ENCODE measurements at regions of chr12 and their contacts with region 1.

Region 1: GRCh38 chr12:27024291-27024690 is 1.9 kb downstream of the MED21 start:
- DNase-seq: no peak
- H3K4me3 ChIP-seq: no peak overlapping the region
- H3K4me3 Mint-ChIP-seq: peak overlapping the region in 6 of 8 donors; percentile 57 to 100 (median 98)
- H3K27ac ChIP-seq: no peak overlapping the region
- H3K27ac Mint-ChIP-seq: peak overlapping the region in 2 of 7 donors; percentile 23 to 98
- H3K4me1 ChIP-seq: peaks cover 30% of the 10 kb centered on the region
- H3K4me1 Mint-ChIP-seq: peaks cover 31 to 51% (median 37%) of the 10 kb centered on the region in 4 donors
- H3K27me3 ChIP-seq: no peaks in the 10 kb centered on the region
- H3K27me3 Mint-ChIP-seq: peaks cover 0 to 2% of the 10 kb centered on the region in 2 donors

Region 2: DNA sequence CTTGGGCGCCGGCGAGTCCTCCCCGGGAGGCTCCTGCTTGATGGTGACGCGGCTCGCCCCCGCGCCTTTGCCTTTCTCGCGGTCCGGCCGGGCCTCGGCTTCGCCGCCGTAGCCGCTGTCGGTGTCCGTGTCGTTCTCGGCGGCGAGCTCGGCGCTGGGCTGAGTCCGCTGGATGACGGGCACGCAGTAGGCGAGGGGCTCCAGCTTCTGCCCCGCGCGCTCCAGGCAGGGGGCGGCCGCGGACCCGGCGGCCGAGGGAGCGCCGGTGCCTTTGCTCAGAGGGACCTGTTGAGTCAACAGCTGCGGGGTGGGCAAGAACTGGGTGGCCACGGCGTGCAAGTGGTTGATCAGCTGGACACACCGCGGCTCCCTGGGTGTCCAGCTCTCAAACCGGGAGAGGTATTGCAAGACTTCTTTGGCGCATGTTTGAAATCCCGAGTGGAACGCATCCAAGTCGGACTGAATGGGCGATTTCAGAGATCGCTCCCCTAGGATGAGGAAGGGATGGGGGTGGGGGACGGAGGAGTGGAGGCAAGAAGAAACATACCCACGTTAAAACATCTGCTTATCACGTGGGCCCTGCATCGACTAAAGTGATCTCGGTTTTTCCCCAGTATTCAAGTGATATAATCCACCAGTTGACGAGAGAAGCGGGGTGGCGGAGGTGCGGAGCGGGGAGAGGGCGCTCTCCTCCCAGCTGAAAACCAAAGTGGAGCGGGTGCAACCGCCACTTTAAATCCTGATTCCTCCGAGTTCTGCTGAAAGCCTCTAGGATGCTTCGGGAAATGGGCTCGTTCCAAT is 901.4 kb before region 1 on chr12:
- CTCF ChIA-PET with region 1: no interaction called
- POLR2A ChIA-PET with region 1: no interaction called
- intact Hi-C with region 1: loop called (anchors 5 kb)
- DNase-seq: peak in 2 of 5 donors; percentile 14 to 16
- H3K4me3 ChIP-seq: peak overlapping the region in 1 of 2 donors; percentile 33
- H3K4me3 Mint-ChIP-seq: peak overlapping the region; percentile 82 to 95 (median 88)
- H3K27ac ChIP-seq: no peak overlapping the region
- H3K27ac Mint-ChIP-seq: peak overlapping the region in 3 of 7 donors; percentile 16 to 62 (median 23)
- H3K4me1 ChIP-seq: peaks cover 39% of the 10 kb centered on the region
- H3K4me1 Mint-ChIP-seq: peaks cover 26 to 61% (median 39%) of the 10 kb centered on the region in 4 donors
- H3K27me3 ChIP-seq: peaks cover 45% of the 10 kb centered on the region
- H3K27me3 Mint-ChIP-seq: peaks cover 54 to 63% of the 10 kb centered on the region in 2 donors

Region 3: DNA sequence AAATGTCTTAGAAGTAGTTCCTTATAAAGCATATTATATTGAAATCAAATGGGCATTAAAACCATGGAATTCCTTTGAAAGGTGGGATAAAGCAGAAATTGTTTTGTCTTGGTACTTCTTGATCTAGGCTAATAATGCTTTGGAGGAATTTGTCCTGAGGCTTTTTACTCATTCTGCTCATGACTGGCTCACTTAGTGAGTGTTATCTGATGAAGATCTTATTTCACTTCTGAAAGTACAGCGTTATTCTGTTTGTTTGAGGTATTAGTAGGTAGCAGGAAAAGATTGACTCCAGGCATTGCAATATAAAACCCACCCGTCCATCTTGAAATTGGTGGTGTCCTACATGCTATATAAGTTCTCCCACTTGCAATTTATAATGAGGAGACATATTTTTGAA is 52.6 kb after region 1 on chr12:
- CTCF ChIA-PET with region 1: no interaction called
- POLR2A ChIA-PET with region 1: no interaction called
- intact Hi-C with region 1: no loop called
- DNase-seq: no peak
- H3K4me3 ChIP-seq: no peak overlapping the region
- H3K4me3 Mint-ChIP-seq: no peak overlapping the region
- H3K27ac ChIP-seq: no peak overlapping the region
- H3K27ac Mint-ChIP-seq: no peak overlapping the region
- H3K4me1 ChIP-seq: no peaks in the 10 kb centered on the region
- H3K4me1 Mint-ChIP-seq: peaks cover 0 to 6% (median 4%) of the 10 kb centered on the region in 4 donors
- H3K27me3 ChIP-seq: no peaks in the 10 kb centered on the region
- H3K27me3 Mint-ChIP-seq: no peaks in the 10 kb centered on the region

Region 4: DNA sequence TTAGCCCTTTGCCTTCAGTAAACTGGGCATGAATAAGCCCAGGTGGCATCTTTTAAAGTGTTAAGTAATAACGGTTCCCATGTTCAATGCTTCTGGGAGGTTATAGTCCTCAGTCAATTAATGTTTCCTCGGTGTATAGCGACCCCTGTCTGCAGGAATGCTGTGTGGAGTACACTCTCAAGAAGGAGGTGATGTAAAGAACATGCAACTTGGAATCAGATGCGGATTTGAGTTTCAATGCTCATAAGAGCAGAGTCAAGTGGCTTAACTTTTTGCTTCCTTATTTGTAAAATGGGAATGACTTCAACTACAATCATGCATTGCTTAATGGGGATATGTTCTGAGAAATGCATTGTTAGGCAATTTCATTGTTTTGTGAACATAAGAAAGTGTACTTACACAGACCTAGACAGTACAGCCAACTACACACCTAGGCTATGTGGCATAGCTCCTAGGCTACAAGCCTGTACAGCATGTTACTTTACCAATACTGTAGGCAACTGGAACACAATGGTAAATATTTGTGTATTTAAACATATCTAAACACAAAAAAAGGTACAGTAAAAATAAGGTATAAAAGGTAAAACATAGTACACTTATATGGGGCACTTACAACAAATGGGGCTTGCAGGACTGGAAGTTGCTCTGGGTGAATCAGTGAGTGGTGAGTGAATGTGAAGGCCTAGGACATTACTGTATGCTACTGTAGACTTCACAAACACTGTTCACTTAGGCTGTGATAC is 679.6 kb after region 1 on chr12:
- CTCF ChIA-PET with region 1: no interaction called
- POLR2A ChIA-PET with region 1: no interaction called
- intact Hi-C with region 1: loop called (anchors 10 kb)
- DNase-seq: peak; percentile 52 to 68 (median 58)
- H3K4me3 ChIP-seq: no peak overlapping the region
- H3K4me3 Mint-ChIP-seq: no peak overlapping the region
- H3K27ac ChIP-seq: no peak overlapping the region
- H3K27ac Mint-ChIP-seq: peak overlapping the region in 1 of 7 donors; percentile 47
- H3K4me1 ChIP-seq: no peaks in the 10 kb centered on the region
- H3K4me1 Mint-ChIP-seq: peaks cover 0 to 3% (median 0%) of the 10 kb centered on the region in 4 donors
- H3K27me3 ChIP-seq: no peaks in the 10 kb centered on the region
- H3K27me3 Mint-ChIP-seq: peaks cover 2 to 7% of the 10 kb centered on the region in 2 donors